ENCODE measurements at regions of chr14 and their contacts with region 1.

Region 1: GRCh38 chr14:36901861-36902260 is 240.2 kb downstream of the PAX9 start:
- DNase-seq: no peak
- H3K4me3 ChIP-seq: no peak overlapping the region
- H3K27ac ChIP-seq: no peak overlapping the region
- H3K27me3 ChIP-seq: no peaks in the 10 kb centered on the region
- CTCF ChIP-seq: no peak

Region 2: DNA sequence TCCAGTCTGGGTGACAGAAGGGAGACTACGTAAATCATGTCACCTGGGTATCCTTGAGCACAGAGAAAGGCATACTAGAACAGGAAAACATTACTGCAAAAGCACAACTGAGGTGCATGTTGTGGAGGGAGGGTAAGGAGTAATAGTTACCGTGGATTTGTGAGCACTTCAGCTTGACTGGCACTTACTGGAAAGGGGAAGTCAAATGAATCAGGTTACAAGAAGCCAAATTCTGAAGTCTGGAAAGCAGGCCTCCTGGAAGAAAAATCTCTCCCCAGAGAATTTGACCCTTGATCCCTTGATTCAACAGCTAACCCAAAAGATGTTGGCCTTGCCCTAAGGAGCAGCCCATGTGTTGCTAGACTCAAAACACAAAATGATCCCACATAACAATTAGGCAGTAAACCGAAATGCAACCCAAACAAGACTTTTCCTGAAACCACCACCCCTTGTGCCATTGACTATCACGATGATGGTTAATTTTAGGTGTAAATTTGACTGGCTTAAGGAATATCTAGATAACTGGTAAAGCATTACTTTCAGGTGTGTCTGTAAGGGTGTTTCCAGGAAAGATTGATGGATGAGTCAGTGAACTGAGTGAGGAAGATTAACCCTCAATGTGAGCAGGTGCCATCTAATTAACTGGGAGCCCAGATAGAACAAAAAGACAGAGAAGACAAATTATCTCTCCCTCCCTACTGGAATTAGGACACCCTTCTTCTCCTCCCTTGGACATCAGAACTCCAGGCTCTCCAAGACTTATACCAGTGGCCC is 161.8 kb after region 1 on chr14:
- CTCF ChIA-PET with region 1: no interaction called
- POLR2A ChIA-PET with region 1: interaction called, 10 read pairs
- DNase-seq: no peak
- H3K4me3 ChIP-seq: no peak overlapping the region
- H3K27ac ChIP-seq: no peak overlapping the region
- H3K27me3 ChIP-seq: no peaks in the 10 kb centered on the region
- CTCF ChIP-seq: no peak